G401 (cell line): ENCODE measurements at regions of chr19 and their contacts with region 1.

Region 1: GRCh38 chr19:7337380-7338194 is 11.2 kb upstream of the ARHGEF18 start:
- DNase-seq: peak; percentile 1

Region 2: GRCh38 chr19:7159105-7159933 is 178.3 kb before region 1 on chr19:
- in situ Hi-C with region 1: loop called (anchors 10 kb)
- DNase-seq: peak; percentile 91